PC-3 (cell line): ENCODE measurements at regions of chr7 and their contacts with region 1.

Region 1: DNA sequence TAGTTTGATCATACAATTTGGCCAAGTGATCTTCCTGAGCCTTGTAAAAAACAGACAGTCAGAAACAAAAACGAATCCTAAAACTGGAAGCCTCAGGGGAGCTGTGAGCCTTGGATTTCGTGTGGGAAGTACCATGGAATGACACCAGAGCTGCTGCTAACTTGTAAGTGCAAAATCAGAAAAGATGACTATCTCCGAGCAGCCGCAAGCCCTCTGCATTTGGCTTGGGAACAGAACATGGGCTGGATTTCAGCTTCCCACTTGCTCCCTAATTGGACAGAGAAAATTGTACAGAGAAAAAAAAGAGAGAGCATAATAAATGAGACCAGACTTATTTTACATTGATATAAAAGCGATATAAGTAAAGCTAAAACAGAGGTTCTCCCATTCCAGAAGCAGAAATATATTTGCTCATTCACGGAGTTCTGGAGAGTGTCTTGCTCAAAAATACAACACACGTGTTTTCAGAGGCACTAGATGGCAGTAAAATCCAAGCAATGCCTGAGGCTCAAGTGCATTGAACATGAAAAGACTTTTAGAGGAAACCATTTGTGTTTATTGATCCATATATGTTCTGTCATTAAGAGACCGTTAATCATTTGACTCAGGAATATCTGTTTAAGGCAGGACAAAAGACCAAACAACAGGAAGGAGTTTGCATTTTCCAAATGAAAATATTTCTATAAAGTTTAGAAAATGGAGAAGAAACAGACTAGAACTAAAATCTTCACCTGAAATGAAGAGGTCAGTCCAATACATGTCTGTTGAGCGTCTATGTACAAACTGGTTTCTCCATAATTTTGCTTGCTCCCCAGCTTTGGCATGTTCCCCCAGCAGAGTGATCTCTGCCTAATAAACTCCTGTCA is 78.3 kb upstream of the SLC26A5 start:
- DNase-seq: peak; percentile 66
- ATAC-seq: peak; percentile 89
- H3K4me3 ChIP-seq: no peak overlapping the region
- H3K27ac ChIP-seq: no peak overlapping the region
- H3K4me1 ChIP-seq: no peaks in the 10 kb centered on the region
- H3K27me3 ChIP-seq: no peaks in the 10 kb centered on the region
- CTCF ChIP-seq: peak; percentile 73

Region 2: GRCh38 chr7:103418241-103418640 is 106.0 kb before region 1 on chr7:
- CTCF ChIA-PET with region 1: no interaction called
- POLR2A ChIA-PET with region 1: no interaction called
- intact Hi-C with region 1: no loop called
- DNase-seq: no peak
- ATAC-seq: no peak
- H3K4me3 ChIP-seq: no peak overlapping the region
- H3K27ac ChIP-seq: no peak overlapping the region
- H3K4me1 ChIP-seq: no peaks in the 10 kb centered on the region
- H3K27me3 ChIP-seq: no peaks in the 10 kb centered on the region
- CTCF ChIP-seq: no peak

Region 3: DNA sequence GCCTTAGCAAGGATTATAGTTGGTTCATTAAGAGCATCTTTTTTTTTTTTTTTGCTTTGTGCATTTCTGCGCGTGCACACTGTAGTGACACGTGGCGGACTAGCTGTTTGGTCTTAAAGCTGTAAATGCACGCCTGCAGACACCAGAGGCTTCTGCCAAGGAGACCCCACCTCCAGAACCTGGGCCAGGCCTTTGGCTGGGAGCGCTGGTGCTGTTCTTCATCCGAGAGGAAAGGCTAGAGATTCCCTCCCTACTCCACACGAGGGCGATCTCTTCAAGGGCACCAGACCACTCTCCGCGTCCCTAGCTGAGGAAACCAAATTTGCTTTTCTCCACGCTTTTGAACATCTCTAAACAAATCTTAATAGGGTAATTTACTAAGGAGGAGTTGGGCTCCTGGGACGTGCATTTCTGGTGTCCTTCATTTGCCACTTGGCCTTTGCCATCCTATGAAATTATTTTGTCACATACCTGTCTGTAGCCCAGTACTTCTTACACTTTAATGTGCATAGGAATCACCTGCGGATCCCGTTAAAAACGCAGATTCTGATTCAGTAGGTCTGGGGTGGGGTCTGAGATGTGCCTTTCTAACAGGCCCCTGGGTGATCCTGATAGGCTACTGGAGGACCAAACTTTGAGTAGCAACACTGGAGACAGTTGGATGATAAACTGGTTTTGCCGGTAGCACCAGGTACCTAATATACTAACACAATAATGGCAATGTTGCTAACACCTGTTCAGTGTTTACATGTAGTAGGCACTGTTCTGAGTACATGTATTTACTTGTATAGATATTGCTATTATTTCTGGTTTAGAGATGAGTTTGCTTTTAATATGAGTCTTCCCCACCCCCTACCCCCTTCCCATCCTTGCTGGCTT is 77.0 kb before region 1 on chr7:
- CTCF ChIA-PET with region 1: interaction called, 4 read pairs
- POLR2A ChIA-PET with region 1: interaction called, 3 read pairs
- intact Hi-C with region 1: loop called (anchors 1 kb)
- DNase-seq: peak; percentile 75
- ATAC-seq: peak; percentile 66
- H3K4me3 ChIP-seq: peak overlapping the region; percentile 71
- H3K27ac ChIP-seq: no peak overlapping the region
- H3K4me1 ChIP-seq: peaks cover 17% of the 10 kb centered on the region
- H3K27me3 ChIP-seq: no peaks in the 10 kb centered on the region
- CTCF ChIP-seq: peak; percentile 90

Region 4: GRCh38 chr7:103560136-103560535 is 35.9 kb after region 1 on chr7:
- CTCF ChIA-PET with region 1: no interaction called
- POLR2A ChIA-PET with region 1: no interaction called
- intact Hi-C with region 1: loop called (anchors 2 kb)
- DNase-seq: no peak
- ATAC-seq: no peak
- H3K4me3 ChIP-seq: no peak overlapping the region
- H3K27ac ChIP-seq: no peak overlapping the region
- H3K4me1 ChIP-seq: no peaks in the 10 kb centered on the region
- H3K27me3 ChIP-seq: no peaks in the 10 kb centered on the region
- CTCF ChIP-seq: no peak

Region 5: GRCh38 chr7:103573479-103574058 is 49.3 kb after region 1 on chr7:
- CTCF ChIA-PET with region 1: no interaction called
- POLR2A ChIA-PET with region 1: no interaction called
- intact Hi-C with region 1: loop called (anchors 1 kb)
- DNase-seq: peak; percentile 78
- ATAC-seq: no peak; the same call in none of the 2 replicates
- H3K4me3 ChIP-seq: no peak overlapping the region
- H3K27ac ChIP-seq: no peak overlapping the region
- H3K4me1 ChIP-seq: no peaks in the 10 kb centered on the region
- H3K27me3 ChIP-seq: no peaks in the 10 kb centered on the region
- CTCF ChIP-seq: peak; percentile 80

Region 6: DNA sequence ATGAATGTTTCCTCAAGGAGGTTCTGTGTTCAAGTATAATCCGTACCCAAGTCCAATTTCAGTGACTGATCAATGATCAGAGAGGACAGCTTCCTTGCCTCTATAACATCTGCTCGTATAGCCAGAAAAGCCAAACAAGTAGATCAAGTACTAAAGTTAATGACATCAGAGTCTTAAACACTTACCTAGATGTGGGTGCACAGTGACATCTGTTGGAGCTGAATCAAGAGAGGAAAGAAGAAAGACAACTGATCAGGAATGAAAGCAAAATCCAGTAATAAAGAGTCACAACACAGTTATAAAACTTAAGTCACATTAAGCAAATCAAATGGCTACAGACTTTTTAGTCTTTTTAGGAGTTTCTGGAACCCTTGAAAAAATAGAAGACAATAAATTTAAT is 228.7 kb after region 1 on chr7:
- CTCF ChIA-PET with region 1: no interaction called
- POLR2A ChIA-PET with region 1: no interaction called
- intact Hi-C with region 1: loop called (anchors 2 kb)
- DNase-seq: peak; percentile 69
- ATAC-seq: peak; percentile 90
- H3K4me3 ChIP-seq: no peak overlapping the region
- H3K27ac ChIP-seq: no peak overlapping the region
- H3K4me1 ChIP-seq: peaks cover 3% of the 10 kb centered on the region; the same call in 1 of the 2 replicates
- H3K27me3 ChIP-seq: no peaks in the 10 kb centered on the region
- CTCF ChIP-seq: peak; percentile 65

Region 7: GRCh38 chr7:104106108-104106905 is 582.0 kb after region 1 on chr7:
- CTCF ChIA-PET with region 1: interaction called, 3 read pairs
- POLR2A ChIA-PET with region 1: no interaction called
- intact Hi-C with region 1: loop called (anchors 2 kb)
- DNase-seq: peak; percentile 15
- ATAC-seq: peak; percentile 83
- H3K4me3 ChIP-seq: no peak overlapping the region
- H3K27ac ChIP-seq: no peak overlapping the region
- H3K4me1 ChIP-seq: no peaks in the 10 kb centered on the region
- H3K27me3 ChIP-seq: no peaks in the 10 kb centered on the region
- CTCF ChIP-seq: peak; percentile 37; the same call in 1 of the 2 replicates

Region 8: DNA sequence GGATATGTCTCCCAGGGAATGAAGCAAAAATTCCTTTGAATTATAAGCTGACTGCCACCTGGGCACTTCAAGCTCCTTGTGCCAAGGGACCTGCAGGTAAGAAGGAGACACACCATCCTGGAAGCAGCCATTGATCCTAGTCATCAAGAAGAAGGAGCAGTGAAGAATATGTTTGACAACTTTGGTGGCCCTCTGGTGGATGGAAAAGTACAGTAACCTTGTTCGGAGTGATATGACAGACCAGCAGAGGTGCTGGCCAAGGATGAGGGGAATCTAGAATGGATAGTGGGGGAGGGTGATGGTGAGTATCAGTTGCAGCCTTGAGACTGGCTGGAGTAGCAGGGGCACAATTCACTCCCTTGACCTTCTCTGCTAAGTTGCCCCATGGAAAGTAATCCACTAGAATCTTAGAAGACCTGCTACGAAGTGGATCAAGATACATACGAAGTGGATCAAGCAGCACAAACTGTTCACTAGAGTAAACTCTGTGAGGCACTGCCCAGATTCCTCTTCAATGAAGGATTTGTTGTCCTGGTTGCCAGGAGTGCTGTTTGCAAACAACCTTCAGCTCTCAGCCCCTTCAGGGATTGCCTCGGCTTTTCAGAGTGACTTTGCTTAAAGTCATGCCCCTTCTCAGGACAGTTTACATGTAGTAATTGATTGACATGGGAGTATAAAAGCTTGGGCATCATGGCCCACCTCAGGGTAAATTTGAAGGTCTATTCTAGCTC is 728.3 kb after region 1 on chr7:
- CTCF ChIA-PET with region 1: no interaction called
- POLR2A ChIA-PET with region 1: no interaction called
- intact Hi-C with region 1: loop called (anchors 10 kb)
- DNase-seq: peak; percentile 25
- ATAC-seq: peak; percentile 76
- H3K4me3 ChIP-seq: no peak overlapping the region
- H3K27ac ChIP-seq: no peak overlapping the region
- H3K4me1 ChIP-seq: no peaks in the 10 kb centered on the region
- H3K27me3 ChIP-seq: peaks cover 17% of the 10 kb centered on the region; the same call in 1 of the 2 replicates
- CTCF ChIP-seq: peak; percentile 48